ENCODE measurements at regions of chr1 and their contacts with region 1.

Region 1: DNA sequence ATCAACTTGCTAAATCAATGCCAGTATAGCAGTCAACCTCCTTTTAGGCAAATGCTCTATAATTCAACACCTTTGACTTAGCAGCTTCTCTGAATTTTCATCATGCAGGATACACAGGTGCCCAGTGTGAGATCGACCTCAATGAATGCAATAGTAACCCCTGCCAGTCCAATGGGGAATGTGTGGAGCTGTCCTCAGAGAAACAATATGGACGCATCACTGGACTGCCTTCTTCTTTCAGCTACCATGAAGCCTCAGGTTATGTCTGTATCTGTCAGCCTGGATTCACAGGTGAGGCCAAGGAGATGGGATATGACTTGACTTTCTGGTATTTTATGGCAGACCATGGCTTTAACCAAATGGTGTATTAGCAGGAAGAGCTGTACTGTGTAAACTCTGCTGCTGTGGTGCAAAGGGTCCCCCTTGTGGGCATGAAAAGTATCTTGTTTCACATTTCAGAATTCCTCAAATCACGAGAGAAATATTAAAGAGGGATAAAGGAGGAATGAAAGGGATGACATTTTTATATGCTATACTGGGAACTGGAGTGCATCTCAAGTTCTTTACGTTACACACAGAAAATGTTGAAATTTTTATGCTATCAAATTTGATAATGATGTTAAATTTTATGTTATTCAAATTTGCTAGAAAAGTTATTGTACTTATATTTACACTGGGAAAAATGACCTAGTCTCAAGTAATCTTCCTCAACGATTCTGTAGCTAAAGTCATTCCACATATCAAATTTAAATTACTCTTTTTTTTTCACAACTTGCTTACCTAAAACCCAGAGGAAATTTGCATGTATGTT is 88.9 kb downstream of the CRB1 start:
- DNase-seq: peak in 2 of 5 donors; percentile 20 to 34
- ATAC-seq: peak in 2 of 4 donors; percentile 66 to 69
- H3K4me3 ChIP-seq: no peak overlapping the region
- H3K27ac ChIP-seq: no peak overlapping the region
- H3K4me1 ChIP-seq: no peaks in the 10 kb centered on the region
- H3K27me3 ChIP-seq: no peaks in the 10 kb centered on the region
- CTCF ChIP-seq: peak; percentile 47 to 71 (median 64)
- POLR2A ChIP-seq: no peak

Region 2: GRCh38 chr1:197180252-197180878 is 176.6 kb before region 1 on chr1:
- intact Hi-C with region 1: loop called (anchors 1 to 10 kb)
- DNase-seq: no peak
- ATAC-seq: peak in 2 of 4 donors; percentile 60 to 62
- H3K4me3 ChIP-seq: no peak overlapping the region
- H3K27ac ChIP-seq: no peak overlapping the region
- H3K4me1 ChIP-seq: peaks cover 0 to 10% (median 0%) of the 10 kb centered on the region in 12 donors
- H3K27me3 ChIP-seq: no peaks in the 10 kb centered on the region
- CTCF ChIP-seq: peak; percentile 48 to 75 (median 64)
- POLR2A ChIP-seq: no peak

Region 3: GRCh38 chr1:197224160-197224559 is 132.8 kb before region 1 on chr1:
- intact Hi-C with region 1: loop called in 4 of 10 experiments (anchors 5 to 10 kb)
- DNase-seq: no peak
- ATAC-seq: no peak
- H3K4me3 ChIP-seq: no peak overlapping the region
- H3K27ac ChIP-seq: no peak overlapping the region
- H3K4me1 ChIP-seq: no peaks in the 10 kb centered on the region
- H3K27me3 ChIP-seq: no peaks in the 10 kb centered on the region
- CTCF ChIP-seq: peak in 10 of 12 donors; percentile 9 to 42 (median 24)
- POLR2A ChIP-seq: no peak

Region 4: DNA sequence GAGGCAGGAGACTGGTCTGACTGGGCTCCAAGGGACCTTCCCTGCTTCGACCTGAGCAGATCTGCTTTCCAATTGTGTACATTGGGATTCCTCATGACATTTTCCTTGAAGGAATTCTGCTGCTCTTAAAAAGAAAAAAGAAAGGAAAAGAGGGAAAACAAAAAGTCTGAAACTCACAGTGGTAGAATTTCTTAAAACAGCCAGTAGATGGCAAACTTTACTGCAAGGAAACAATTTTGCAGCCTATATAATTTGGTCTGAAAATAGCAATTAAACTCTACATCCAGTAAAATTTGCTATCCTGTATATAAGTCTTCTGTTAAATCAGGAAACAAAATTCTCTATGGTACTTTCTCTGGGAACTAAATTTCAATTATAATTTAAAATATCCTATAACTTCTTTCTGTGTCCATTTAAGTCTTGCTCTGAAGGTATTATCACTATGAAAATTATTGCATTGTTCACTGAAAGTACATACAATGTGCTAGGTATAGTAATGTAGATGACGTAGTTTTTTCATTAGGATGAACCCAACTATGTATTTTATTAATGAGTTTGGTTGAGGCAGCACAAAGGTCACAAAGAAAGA is 29.1 kb before region 1 on chr1:
- intact Hi-C with region 1: loop called in 2 of 10 experiments (anchors 2 kb)
- DNase-seq: no peak
- ATAC-seq: no peak
- H3K4me3 ChIP-seq: no peak overlapping the region
- H3K27ac ChIP-seq: no peak overlapping the region
- H3K4me1 ChIP-seq: peaks cover 0 to 4% (median 0%) of the 10 kb centered on the region in 12 donors
- H3K27me3 ChIP-seq: no peaks in the 10 kb centered on the region
- CTCF ChIP-seq: peak; percentile 23 to 64 (median 48)
- POLR2A ChIP-seq: no peak

Region 5: GRCh38 chr1:197343663-197344273 is 13.2 kb before region 1 on chr1:
- intact Hi-C with region 1: no loop called
- DNase-seq: peak in 1 of 5 donors; percentile 40
- ATAC-seq: no peak
- H3K4me3 ChIP-seq: no peak overlapping the region
- H3K27ac ChIP-seq: no peak overlapping the region
- H3K4me1 ChIP-seq: no peaks in the 10 kb centered on the region
- H3K27me3 ChIP-seq: no peaks in the 10 kb centered on the region
- CTCF ChIP-seq: no peak
- POLR2A ChIP-seq: no peak

Region 6: DNA sequence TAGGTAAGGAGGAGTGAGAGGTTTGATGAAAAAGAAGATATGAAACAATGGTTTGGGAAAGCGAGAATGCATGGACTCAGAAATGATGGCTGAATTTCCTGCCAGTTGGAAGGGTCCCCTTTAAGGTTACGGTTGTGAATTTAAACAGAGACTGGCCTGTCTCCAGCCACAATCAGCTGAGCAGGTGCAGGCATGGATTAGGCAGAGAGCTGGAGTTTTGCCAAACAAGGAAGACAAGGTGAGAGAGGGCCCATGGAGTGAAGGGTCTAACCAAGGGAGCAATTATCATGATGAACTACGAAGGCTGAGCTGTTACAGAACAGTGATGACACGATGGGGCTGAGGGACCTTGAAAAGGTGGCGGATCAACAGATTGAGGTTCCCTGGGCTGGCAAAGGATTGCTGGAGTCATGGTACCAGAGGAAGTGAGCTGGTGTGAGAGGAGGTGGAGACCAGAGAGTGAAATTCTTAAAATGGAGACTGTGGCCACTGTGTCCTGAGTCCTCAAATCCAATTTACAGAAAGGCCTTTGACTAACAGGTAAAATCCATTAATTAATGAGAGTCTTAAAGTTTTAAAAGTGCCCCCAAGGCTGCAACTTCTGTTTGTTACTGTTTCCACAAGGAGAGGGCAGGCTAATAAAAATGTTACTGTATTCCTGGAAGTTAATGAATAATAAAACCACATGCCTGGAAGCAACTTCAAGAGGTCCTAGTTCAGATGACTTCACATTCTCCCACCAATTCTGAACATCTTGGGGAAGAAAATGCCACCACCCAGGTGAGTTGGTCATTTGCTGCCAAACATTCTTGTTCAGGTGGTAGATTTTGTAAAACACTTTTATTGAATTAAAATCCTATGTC is 601.7 kb after region 1 on chr1:
- intact Hi-C with region 1: no loop called
- DNase-seq: no peak
- ATAC-seq: no peak
- H3K4me3 ChIP-seq: no peak overlapping the region
- H3K27ac ChIP-seq: no peak overlapping the region
- H3K4me1 ChIP-seq: no peaks in the 10 kb centered on the region
- H3K27me3 ChIP-seq: no peaks in the 10 kb centered on the region
- CTCF ChIP-seq: no peak
- POLR2A ChIP-seq: no peak